Heart left ventricle (tissue), 16 donors: ENCODE measurements at regions of chr4 and their contacts with region 1.

Region 1: GRCh38 chr4:8886612-8887406 is 15.2 kb upstream of the HMX1 start:
- DNase-seq: no peak
- ATAC-seq: no peak
- H3K4me3 ChIP-seq: no peak overlapping the region
- H3K27ac ChIP-seq: no peak overlapping the region
- H3K4me1 ChIP-seq: peaks cover 0 to 2% (median 0%) of the 10 kb centered on the region in 12 donors
- H3K27me3 ChIP-seq: peaks cover 22 to 91% (median 56%) of the 10 kb centered on the region in 9 donors
- CTCF ChIP-seq: peak in 4 of 12 donors; percentile 6 to 26 (median 14)
- POLR2A ChIP-seq: no peak

Region 2: GRCh38 chr4:8607603-8608481 is 279.0 kb before region 1 on chr4:
- intact Hi-C with region 1: loop called in 3 of 10 experiments (anchors 10 kb)
- DNase-seq: peak in 2 of 5 donors; percentile 24 to 36
- ATAC-seq: peak in 1 of 4 donors; percentile 13
- H3K4me3 ChIP-seq: no peak overlapping the region
- H3K27ac ChIP-seq: no peak overlapping the region
- H3K4me1 ChIP-seq: peaks cover 0 to 21% (median 5%) of the 10 kb centered on the region in 12 donors
- H3K27me3 ChIP-seq: peaks cover 0 to 18% (median 8%) of the 10 kb centered on the region in 9 donors
- CTCF ChIP-seq: peak; percentile 85 to 99 (median 96)
- POLR2A ChIP-seq: no peak

Region 3: DNA sequence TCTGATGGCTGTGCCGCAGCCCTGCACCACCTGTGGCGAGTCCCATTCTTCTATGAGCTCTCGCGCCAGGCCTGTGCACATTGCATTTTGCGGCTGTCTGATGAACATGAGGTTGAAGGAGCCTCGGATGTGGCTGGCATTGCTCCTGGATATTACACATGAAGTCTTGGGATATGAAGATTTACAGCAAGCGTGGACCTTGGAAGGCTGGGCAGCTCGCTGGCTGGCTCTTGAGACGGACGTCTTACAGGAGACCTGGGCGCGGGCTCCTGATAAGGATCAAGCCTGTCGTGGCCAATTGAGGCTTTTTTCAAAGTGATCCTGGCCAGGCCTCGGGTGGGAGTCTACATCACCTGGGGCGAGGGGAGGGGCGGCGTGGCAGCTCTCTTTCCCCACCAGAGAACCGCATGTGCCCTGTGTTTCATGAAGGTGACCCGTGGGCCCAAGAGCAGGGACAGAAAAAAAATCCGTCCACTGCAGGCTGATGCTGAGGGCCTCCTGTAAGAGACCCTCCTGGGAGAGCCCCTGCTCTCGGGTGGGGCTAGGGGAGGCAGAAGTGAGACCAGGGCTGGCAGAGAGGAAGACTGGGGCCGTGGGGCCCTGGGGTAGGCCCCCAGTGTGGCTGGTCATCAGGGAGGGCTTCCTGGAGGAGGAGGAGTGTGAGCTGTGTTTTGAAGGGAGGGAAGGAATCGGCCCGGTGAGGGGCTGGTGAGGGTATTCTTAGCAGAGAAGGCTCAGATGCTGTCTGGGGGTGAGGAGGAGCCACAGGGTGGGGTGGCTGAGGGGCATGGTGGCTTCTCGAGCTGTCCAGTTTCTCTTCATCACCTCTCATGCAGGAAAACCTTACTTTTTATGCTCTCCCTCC is 270.7 kb before region 1 on chr4:
- intact Hi-C with region 1: loop called in 1 of 10 experiments (anchors 10 kb)
- DNase-seq: peak in 3 of 5 donors; percentile 4 to 23 (median 18)
- ATAC-seq: no peak
- H3K4me3 ChIP-seq: no peak overlapping the region
- H3K27ac ChIP-seq: no peak overlapping the region
- H3K4me1 ChIP-seq: peaks cover 0 to 11% (median 2%) of the 10 kb centered on the region in 12 donors
- H3K27me3 ChIP-seq: peaks cover 0 to 18% (median 0%) of the 10 kb centered on the region in 9 donors
- CTCF ChIP-seq: no peak
- POLR2A ChIP-seq: no peak

Region 4: DNA sequence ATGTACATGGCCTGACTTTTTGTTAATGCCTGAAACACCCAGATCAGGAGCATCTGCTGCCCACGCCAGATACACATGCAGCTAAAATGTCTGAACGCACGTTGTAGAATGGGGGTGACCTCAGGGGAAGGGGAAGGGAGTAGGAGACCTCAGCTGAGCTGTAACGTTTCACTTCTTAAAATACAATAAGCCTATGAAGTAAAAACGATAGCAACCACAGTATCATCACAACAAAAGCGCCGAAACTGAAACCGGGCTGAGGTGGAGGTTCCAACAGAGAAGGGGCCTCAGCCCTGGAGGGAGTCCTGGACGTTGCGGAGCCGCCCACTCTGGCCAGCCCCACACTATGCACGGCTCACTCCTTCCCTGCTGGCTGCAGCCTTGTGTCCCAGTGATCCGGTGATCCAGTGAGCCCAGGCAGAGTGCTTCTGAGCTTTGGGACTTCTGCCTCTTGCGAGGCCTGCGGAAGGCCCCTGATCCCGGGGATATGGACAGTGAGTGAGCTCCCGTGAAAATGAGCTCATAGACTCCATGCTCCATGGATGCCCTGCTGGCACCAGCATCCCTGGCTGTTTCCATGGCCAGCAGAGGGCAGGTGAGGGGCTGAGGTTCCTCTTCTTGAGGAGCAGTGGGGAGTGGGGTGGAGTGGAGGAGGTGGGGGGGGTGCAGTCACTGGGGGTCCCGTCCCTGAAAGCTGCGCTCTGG is 67.2 kb before region 1 on chr4:
- intact Hi-C with region 1: no loop called
- DNase-seq: peak in 1 of 5 donors; percentile 7
- ATAC-seq: no peak
- H3K4me3 ChIP-seq: no peak overlapping the region
- H3K27ac ChIP-seq: no peak overlapping the region
- H3K4me1 ChIP-seq: no peaks in the 10 kb centered on the region
- H3K27me3 ChIP-seq: peaks cover 0 to 53% (median 5%) of the 10 kb centered on the region in 9 donors
- CTCF ChIP-seq: no peak
- POLR2A ChIP-seq: no peak